ENCODE measurements at regions of chr11 and their contacts with region 1.

Region 1: GRCh38 chr11:112289588-112290492 is 29.2 kb upstream of the PLET1 start:
- DNase-seq: peak; percentile 73 to 92 (median 84)
- ATAC-seq: peak; percentile 98
- H3K4me3 ChIP-seq: peak overlapping the region; percentile 54
- H3K4me3 Mint-ChIP-seq: peak overlapping the region; percentile 83
- H3K27ac ChIP-seq: peak overlapping the region in 1 of 2 donors; percentile 16
- H3K27ac Mint-ChIP-seq: peak overlapping the region; percentile 31
- H3K4me1 ChIP-seq: peaks cover 17% of the 10 kb centered on the region
- H3K4me1 Mint-ChIP-seq: peaks cover 36% of the 10 kb centered on the region
- H3K27me3 ChIP-seq: no peaks in the 10 kb centered on the region
- H3K27me3 Mint-ChIP-seq: no peaks in the 10 kb centered on the region
- CTCF ChIP-seq: peak; percentile 93

Region 2: GRCh38 chr11:112321521-112322172 is 31.8 kb after region 1 on chr11:
- CTCF ChIA-PET with region 1: no interaction called
- POLR2A ChIA-PET with region 1: no interaction called
- intact Hi-C with region 1: no loop called
- DNase-seq: peak in 4 of 14 experiments; percentile 13 to 27 (median 18)
- ATAC-seq: peak; percentile 49
- H3K4me3 ChIP-seq: no peak overlapping the region
- H3K4me3 Mint-ChIP-seq: peak overlapping the region; percentile 42
- H3K27ac ChIP-seq: no peak overlapping the region
- H3K27ac Mint-ChIP-seq: peak overlapping the region; percentile 34
- H3K4me1 ChIP-seq: peaks cover 16% of the 10 kb centered on the region
- H3K4me1 Mint-ChIP-seq: peaks cover 29% of the 10 kb centered on the region
- H3K27me3 ChIP-seq: no peaks in the 10 kb centered on the region
- H3K27me3 Mint-ChIP-seq: no peaks in the 10 kb centered on the region
- CTCF ChIP-seq: no peak

Region 3: DNA sequence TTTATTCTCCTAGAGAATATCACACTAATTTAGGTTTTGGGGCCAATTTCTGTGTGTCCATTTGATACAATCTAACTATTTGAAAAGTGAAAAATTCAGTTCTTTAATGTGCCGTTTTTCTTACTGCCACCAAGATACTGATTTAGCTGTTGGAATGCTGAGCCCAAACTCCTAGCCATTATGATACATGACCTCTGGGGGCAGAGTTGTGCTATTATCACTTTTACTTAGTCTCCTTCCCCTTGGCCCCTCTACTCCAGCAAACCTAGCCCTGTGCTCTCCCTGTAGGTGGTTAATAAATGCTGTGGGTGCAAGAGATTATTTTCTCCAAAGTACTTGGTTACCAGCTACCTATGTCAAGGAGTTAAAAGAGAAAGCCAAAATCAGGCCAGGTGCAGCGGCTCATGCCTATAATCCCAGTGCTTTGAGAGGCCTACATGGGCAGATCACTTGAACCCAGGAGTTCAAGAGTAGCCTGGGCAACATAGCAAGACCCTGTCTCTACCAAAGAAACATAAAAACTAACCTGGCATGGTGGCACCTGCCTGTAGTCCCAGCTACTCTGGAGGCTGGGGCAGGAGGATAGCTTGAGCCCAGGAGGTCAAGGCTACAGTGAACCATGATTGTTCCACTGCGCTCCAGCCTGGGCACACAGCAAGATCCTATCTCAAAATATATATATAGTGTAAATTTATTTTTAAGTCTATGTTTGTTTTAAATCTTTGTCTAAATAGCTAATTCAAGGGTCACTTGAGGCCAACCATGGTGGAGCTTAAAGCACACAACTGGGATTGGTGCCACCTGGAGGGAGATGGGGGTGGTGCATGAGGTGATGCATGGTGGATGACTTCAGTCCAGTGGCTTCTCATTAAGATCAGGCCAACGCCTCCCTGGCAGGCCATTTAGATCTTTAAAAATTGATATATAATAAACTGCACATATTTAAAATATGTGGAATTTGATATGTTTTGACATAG is 164.0 kb after region 1 on chr11:
- CTCF ChIA-PET with region 1: no interaction called
- POLR2A ChIA-PET with region 1: interaction called, 4 read pairs
- intact Hi-C with region 1: loop called (anchors 1 to 5 kb)
- DNase-seq: peak in 11 of 14 experiments; percentile 2 to 62 (median 25)
- ATAC-seq: peak; percentile 52
- H3K4me3 ChIP-seq: no peak overlapping the region
- H3K4me3 Mint-ChIP-seq: no peak overlapping the region
- H3K27ac ChIP-seq: no peak overlapping the region
- H3K27ac Mint-ChIP-seq: no peak overlapping the region
- H3K4me1 ChIP-seq: peaks cover 3% of the 10 kb centered on the region
- H3K4me1 Mint-ChIP-seq: no peaks in the 10 kb centered on the region
- H3K27me3 ChIP-seq: no peaks in the 10 kb centered on the region
- H3K27me3 Mint-ChIP-seq: no peaks in the 10 kb centered on the region
- CTCF ChIP-seq: peak; percentile 58

Region 4: GRCh38 chr11:112555491-112556364 is 265.9 kb after region 1 on chr11:
- CTCF ChIA-PET with region 1: interaction called, 4 read pairs
- POLR2A ChIA-PET with region 1: interaction called, 7 read pairs
- intact Hi-C with region 1: loop called (anchors 1 kb)
- DNase-seq: peak; percentile 50 to 83 (median 60)
- ATAC-seq: peak; percentile 74
- H3K4me3 ChIP-seq: no peak overlapping the region
- H3K4me3 Mint-ChIP-seq: no peak overlapping the region
- H3K27ac ChIP-seq: no peak overlapping the region
- H3K27ac Mint-ChIP-seq: no peak overlapping the region
- H3K4me1 ChIP-seq: peaks cover 6% of the 10 kb centered on the region
- H3K4me1 Mint-ChIP-seq: no peaks in the 10 kb centered on the region
- H3K27me3 ChIP-seq: peaks cover 0 to 4% of the 10 kb centered on the region in 2 experiments
- H3K27me3 Mint-ChIP-seq: no peaks in the 10 kb centered on the region
- CTCF ChIP-seq: peak; percentile 73

Region 5: DNA sequence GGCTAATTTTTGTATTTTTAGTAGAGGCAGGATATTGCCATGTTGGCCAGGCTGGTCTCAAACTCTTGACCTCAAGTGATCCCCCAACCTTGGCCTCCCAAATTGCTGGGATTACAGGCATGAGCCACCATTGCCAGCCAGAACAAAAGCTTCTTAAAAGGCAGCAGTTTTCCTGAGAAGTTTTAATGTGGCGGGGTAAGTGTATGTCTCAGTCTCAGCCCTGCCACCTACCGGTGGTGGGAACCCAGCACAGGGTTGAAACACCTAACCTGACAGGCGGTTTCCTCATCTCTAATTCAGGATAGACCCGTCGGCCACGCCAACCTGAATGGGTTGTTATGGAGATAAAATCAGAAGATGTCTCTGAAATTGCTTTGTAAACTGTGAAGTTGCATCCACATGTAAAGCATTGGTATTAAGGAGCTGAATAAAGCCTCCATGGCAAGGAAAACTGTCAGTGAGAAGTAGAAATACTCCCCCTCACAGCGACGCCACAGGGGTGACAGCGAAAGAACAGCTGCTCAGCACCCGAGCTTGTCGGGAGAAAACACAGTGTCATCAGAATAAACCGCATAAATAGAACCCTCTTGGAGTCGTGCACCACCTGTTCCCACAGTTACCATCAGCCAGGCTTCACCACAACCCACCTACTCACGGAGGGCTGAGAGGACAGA is 505.4 kb after region 1 on chr11:
- CTCF ChIA-PET with region 1: no interaction called
- POLR2A ChIA-PET with region 1: no interaction called
- intact Hi-C with region 1: loop called (anchors 2 to 5 kb)
- DNase-seq: peak in 5 of 14 experiments; percentile 0 to 27 (median 21)
- ATAC-seq: no peak
- H3K4me3 ChIP-seq: no peak overlapping the region
- H3K4me3 Mint-ChIP-seq: no peak overlapping the region
- H3K27ac ChIP-seq: no peak overlapping the region
- H3K27ac Mint-ChIP-seq: no peak overlapping the region
- H3K4me1 ChIP-seq: no peaks in the 10 kb centered on the region
- H3K4me1 Mint-ChIP-seq: peaks cover 5% of the 10 kb centered on the region
- H3K27me3 ChIP-seq: peaks cover 0 to 3% of the 10 kb centered on the region in 2 experiments
- H3K27me3 Mint-ChIP-seq: no peaks in the 10 kb centered on the region
- CTCF ChIP-seq: peak; percentile 45

Region 6: GRCh38 chr11:113289431-113290187 is 999.8 kb after region 1 on chr11:
- CTCF ChIA-PET with region 1: interaction called, 3 read pairs
- POLR2A ChIA-PET with region 1: no interaction called
- intact Hi-C with region 1: loop called (anchors 1 to 2 kb)
- DNase-seq: peak; percentile 24 to 79 (median 48)
- ATAC-seq: peak; percentile 98
- H3K4me3 ChIP-seq: no peak overlapping the region
- H3K4me3 Mint-ChIP-seq: no peak overlapping the region
- H3K27ac ChIP-seq: no peak overlapping the region
- H3K27ac Mint-ChIP-seq: no peak overlapping the region
- H3K4me1 ChIP-seq: peaks cover 4% of the 10 kb centered on the region
- H3K4me1 Mint-ChIP-seq: no peaks in the 10 kb centered on the region
- H3K27me3 ChIP-seq: peaks cover 0 to 5% of the 10 kb centered on the region in 2 experiments
- H3K27me3 Mint-ChIP-seq: peaks cover 23% of the 10 kb centered on the region
- CTCF ChIP-seq: peak; percentile 74

Region 7: DNA sequence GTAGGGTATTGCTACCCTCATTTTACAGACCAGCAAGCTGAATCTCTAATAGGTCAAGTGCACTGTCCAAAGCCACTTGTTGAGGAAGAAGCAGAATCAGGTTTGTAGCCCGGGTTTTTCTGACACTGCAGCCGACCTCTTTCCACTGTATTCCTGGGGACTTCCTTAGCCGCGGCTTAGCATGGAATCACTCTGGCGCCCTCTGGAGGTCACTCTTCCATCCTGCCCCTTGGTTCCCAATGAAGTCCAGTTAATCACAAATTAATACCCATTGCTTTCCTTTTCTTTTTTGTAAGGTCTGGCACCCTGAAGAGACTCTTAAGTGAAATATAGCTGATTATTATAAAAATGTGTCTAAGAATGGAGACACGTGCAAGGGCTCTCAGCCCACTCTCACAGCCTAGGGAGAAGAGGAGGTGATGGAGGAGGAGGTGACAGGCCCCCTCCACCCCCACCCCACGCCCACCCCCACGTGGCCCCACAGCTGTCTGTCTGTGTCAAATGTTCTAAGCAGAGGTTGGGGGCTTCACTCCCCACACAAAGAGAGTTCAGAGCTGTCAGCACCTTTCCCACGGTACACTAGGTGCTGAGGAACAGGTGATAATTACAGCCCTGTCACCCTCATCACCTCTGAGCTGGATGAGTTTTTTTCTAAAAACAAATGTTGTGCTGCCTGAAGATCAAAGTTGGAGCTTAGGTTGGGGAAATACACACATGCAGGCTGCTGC is 1243.0 kb after region 1 on chr11:
- CTCF ChIA-PET with region 1: no interaction called
- POLR2A ChIA-PET with region 1: no interaction called
- intact Hi-C with region 1: loop called in 1 of 2 experiments (anchors 5 kb)
- DNase-seq: peak; percentile 26 to 74 (median 44)
- ATAC-seq: peak; percentile 32
- H3K4me3 ChIP-seq: no peak overlapping the region
- H3K4me3 Mint-ChIP-seq: no peak overlapping the region
- H3K27ac ChIP-seq: no peak overlapping the region
- H3K27ac Mint-ChIP-seq: no peak overlapping the region
- H3K4me1 ChIP-seq: peaks cover 3% of the 10 kb centered on the region
- H3K4me1 Mint-ChIP-seq: no peaks in the 10 kb centered on the region
- H3K27me3 ChIP-seq: no peaks in the 10 kb centered on the region
- H3K27me3 Mint-ChIP-seq: peaks cover 34% of the 10 kb centered on the region
- CTCF ChIP-seq: peak; percentile 69

Region 8: DNA sequence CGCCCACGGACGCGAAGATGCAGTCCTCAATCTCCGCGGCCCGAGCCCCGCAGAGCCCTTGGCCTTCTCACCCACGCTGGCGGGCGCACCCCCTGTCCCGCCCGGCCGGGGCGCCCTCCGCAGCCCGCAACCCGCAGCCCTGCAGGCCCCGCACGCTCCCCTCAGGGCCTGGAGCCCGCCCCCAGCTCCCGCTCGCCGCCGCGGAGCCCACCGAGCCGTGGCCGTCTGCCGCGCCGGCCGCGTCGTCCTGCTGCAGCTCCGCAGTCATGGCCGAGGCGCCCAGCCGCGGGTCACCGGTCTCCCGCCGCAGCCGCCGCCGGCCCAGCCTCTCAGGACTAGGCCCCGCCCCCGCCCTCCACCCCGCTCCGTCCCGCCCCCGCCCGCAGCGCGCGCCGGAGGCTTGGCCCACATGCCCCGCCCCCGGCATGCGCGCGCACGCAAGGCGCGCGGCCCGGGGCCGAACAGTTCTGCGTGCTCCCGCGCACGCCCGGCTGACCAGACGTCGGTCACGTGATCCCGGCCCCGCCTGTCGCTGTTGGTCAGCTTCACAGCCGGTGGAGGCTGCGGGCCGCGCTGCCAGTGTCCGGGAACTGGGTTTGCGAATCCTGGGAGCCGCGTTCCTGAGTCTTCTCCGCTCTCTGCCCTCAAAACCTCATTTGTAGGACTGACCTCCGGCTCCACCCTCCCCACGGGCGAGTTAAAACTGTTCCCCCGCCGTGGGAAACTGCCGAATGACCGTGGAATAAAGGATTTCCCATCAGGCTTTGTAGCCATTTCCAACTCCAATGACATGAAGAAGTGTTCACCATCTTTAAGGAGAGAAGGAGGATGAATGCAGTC is 1585.6 kb after region 1 on chr11 and contains the start of gene USP28:
- CTCF ChIA-PET with region 1: no interaction called
- POLR2A ChIA-PET with region 1: no interaction called
- intact Hi-C with region 1: loop called in 1 of 2 experiments (anchors 5 kb)
- DNase-seq: peak; percentile 47 to 92 (median 72)
- ATAC-seq: peak; percentile 84
- H3K4me3 ChIP-seq: peak within 1 kb of the TSS; percentile 89
- H3K4me3 Mint-ChIP-seq: peak within 1 kb of the TSS; percentile 100
- H3K27ac ChIP-seq: peak within 1 kb of the TSS; percentile 65 to 80
- H3K27ac Mint-ChIP-seq: peak within 1 kb of the TSS; percentile 91
- H3K4me1 ChIP-seq: peaks cover 19% of the 10 kb centered on the region
- H3K4me1 Mint-ChIP-seq: peaks cover 54% of the 10 kb centered on the region
- H3K27me3 ChIP-seq: no peaks in the 10 kb centered on the region
- H3K27me3 Mint-ChIP-seq: no peaks in the 10 kb centered on the region
- CTCF ChIP-seq: no peak
- total RNA-seq, gene USP28: 7.9 to 9.4 TPM